Activated naive CD4-positive, alpha-beta T cell treated with anti-CD3 and anti-CD28 coated beads for 36 hours (primary cell): ENCODE measurements at regions of chr12 and their contacts with region 1.

Region 1: GRCh38 chr12:62250671-62251608 is 9.3 kb upstream of the USP15 start:
- DNase-seq: peak; percentile 16
- H3K4me3 Mint-ChIP-seq: peak overlapping the region; percentile 5
- H3K27ac Mint-ChIP-seq: peak overlapping the region; percentile 43
- H3K4me1 Mint-ChIP-seq: peaks cover 30% of the 10 kb centered on the region
- H3K27me3 Mint-ChIP-seq: no peaks in the 10 kb centered on the region

Region 2: DNA sequence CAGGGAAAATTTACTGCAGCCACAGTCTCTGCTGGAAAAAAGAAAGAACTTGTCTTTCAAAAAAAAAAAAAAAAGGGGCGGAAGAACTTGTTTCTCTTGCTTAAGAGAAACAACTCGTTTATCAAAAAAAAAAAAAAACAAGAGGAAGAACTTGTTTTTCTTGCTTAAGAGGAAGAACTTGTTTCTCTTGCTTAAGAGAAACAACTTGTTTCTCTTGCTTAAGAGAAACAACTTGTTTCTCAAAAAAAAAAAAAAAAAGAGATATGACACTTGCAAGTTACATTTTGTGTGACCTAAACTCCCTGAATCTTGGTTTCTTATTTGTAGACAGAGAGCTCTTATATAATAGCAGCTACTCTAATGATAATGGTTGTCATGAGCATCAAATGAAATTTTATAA is 35.4 kb before region 1 on chr12:
- CTCF ChIA-PET with region 1: interaction called, 3 read pairs
- intact Hi-C with region 1: loop called (anchors 2 kb)
- DNase-seq: no peak
- H3K4me3 Mint-ChIP-seq: no peak overlapping the region
- H3K27ac Mint-ChIP-seq: no peak overlapping the region
- H3K4me1 Mint-ChIP-seq: peaks cover 20% of the 10 kb centered on the region
- H3K27me3 Mint-ChIP-seq: no peaks in the 10 kb centered on the region